G401 (cell line): ENCODE measurements at regions of chr17 and their contacts with region 1.

Region 1: DNA sequence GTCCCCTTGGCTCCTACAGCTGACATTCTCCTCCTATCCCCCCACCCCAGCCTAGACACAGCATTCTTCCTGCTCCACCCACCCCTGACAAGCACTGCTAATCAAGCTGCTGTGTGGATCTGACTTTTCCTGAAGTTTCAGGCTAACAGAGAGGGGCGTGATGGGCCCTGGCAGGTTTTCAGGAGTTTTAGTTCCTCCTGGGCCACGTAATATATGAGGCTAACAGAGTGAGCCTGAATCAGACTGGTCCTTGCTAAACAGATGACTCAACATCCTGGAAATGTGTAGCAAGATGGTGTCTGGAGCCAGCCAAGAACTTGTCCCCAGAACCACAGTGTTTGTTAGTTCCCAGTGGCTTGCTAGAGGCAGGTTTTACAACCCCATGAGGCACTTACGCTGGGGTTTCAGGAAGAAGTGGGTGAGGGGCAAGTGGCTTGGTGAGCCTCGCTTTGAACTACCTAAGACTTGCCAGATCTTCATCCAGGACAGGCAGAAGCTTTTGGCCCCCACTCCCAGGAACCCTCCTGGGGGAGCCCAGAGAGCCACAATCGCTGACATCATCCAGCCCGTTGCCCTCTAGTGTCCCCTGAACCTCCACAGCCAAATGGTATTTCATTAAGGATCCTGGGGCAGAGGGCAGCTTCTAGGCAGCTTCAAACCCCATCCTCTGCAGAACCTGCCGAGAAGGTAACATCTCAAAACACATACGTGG is 15.9 kb downstream of the TMEM92 start:
- DNase-seq: no peak

Region 2: DNA sequence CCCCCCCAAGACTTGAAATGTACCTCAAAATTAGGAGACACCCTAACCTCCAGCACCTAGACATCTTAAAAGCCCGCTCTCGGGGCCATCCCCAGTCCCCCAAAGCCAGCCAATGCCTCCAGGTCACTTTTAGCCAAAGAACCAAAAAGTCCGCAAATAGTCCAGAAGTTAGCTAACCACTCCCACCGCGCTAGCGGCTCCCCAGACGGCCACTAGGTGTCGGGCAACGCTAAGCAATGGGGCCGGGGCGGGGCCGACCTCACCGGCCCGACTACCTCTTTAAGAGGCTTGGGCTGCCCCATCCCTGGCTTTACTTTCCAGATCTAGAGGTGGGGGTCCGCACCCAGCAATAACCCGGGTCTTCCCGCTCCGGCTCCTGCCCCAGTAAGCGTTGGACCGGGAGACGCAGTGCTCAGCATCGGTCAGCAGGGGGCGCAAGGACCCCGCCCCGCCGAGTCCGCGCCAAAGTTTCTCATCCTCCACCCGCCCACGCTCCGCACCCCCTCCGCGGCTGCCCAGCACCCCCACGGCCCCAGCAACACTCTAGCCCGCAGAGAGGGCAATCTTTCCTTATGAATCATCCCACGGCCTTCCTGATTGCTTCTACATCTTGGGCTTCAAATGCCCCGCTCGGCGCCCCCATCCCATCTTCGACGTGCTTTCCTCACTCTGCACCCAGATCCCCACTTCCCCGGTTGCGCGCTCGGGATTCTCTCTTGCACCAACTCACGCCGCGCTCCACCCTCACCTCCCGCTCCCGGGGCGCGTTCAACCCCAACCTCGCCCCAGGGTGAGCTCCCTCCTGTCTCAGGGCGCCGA is 89.5 kb before region 1 on chr17:
- in situ Hi-C with region 1: loop called (anchors 5 kb)
- DNase-seq: peak; percentile 70